ENCODE measurements at regions of chr5 and their contacts with region 1.

Region 1: GRCh38 chr5:40879163-40879942 is 29.9 kb upstream of the C7 start:
- DNase-seq: peak; percentile 13
- H3K4me3 ChIP-seq: no peak overlapping the region
- H3K27ac ChIP-seq: no peak overlapping the region
- H3K4me1 ChIP-seq: no peaks in the 10 kb centered on the region
- H3K27me3 ChIP-seq: no peaks in the 10 kb centered on the region
- CTCF ChIP-seq: peak; percentile 42 to 49

Region 2: DNA sequence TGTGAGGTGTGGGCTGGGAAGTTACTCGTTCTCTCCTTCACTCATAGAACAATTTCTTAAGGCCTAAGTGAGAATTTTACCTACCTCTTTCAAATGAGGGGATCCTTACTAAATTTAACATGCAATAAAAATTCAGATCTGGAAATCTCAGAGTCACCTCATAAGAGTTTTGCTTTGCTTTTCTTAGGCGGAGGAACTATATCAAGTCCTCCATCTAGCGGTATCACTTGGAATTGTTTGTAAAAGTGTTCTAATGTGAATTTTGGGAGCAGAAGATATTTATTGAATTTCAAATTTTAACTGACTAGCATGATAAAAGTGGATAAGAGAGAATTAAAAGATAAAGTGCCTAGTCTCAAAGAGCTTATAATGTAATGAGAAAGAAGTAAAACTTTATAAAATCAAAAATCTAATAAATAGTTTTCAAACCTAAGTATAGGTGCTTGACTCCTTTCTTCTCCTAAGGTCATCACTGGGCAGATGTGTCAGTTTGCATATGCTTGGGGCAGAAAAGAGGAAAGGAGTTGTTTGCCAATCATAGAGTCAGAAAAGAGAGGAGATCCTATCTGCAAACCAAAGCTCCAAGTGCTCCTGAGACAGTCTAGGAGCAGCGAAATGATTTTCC is 1308.8 kb before region 1 on chr5:
- CTCF ChIA-PET with region 1: no interaction called
- dilution Hi-C with region 1: no loop called
- in situ Hi-C with region 1: no loop called
- intact Hi-C with region 1: loop called (anchors 10 kb)
- DNase-seq: peak; percentile 28
- H3K4me3 ChIP-seq: no peak overlapping the region
- H3K27ac ChIP-seq: no peak overlapping the region
- H3K4me1 ChIP-seq: no peaks in the 10 kb centered on the region
- H3K27me3 ChIP-seq: no peaks in the 10 kb centered on the region
- CTCF ChIP-seq: peak; percentile 69 to 71

Region 3: GRCh38 chr5:39948867-39949468 is 930.4 kb before region 1 on chr5:
- CTCF ChIA-PET with region 1: no interaction called
- dilution Hi-C with region 1: no loop called
- in situ Hi-C with region 1: no loop called
- intact Hi-C with region 1: loop called (anchors 2 kb)
- DNase-seq: peak; percentile 50
- H3K4me3 ChIP-seq: no peak overlapping the region
- H3K27ac ChIP-seq: no peak overlapping the region
- H3K4me1 ChIP-seq: no peaks in the 10 kb centered on the region
- H3K27me3 ChIP-seq: no peaks in the 10 kb centered on the region
- CTCF ChIP-seq: peak; percentile 62 to 67

Region 4: DNA sequence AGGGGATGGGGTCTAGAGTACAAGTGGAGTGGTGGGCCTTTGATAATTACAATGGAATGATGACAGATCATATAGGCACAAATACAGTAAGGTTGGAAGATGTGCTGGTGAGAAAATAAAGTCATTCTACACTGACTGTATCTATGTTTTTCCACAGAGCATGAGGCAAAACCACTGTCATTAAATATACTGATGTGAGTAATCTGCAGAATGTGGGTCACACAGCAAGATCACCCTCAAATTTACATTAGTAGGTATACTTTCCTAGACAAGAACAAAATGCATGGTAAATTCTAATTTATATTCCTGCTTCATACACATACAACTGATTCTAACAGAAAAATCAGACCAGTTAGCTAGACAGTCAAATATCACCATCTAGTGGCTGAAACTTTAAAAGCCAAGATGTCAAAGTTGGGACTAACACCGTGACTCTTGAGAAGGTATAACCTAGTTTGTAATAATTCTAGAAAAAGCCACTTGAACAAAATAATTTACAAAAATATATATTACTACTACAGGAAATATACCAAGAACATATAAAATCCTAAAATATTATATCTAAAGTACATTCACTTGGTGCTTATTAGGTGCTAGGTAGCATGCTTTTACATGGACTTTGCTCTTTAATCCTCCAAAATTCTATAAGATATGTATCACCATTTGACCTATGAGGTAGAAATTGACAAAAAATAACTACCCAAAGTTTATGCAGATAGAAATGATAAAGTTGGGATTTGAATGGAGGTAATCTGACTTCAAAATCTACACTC is 143.1 kb before region 1 on chr5:
- CTCF ChIA-PET with region 1: no interaction called
- dilution Hi-C with region 1: no loop called
- in situ Hi-C with region 1: no loop called
- intact Hi-C with region 1: loop called (anchors 5 kb)
- DNase-seq: peak; percentile 55
- H3K4me3 ChIP-seq: no peak overlapping the region
- H3K27ac ChIP-seq: no peak overlapping the region
- H3K4me1 ChIP-seq: peaks cover 10% of the 10 kb centered on the region
- H3K27me3 ChIP-seq: no peaks in the 10 kb centered on the region
- CTCF ChIP-seq: peak; percentile 69 to 74

Region 5: DNA sequence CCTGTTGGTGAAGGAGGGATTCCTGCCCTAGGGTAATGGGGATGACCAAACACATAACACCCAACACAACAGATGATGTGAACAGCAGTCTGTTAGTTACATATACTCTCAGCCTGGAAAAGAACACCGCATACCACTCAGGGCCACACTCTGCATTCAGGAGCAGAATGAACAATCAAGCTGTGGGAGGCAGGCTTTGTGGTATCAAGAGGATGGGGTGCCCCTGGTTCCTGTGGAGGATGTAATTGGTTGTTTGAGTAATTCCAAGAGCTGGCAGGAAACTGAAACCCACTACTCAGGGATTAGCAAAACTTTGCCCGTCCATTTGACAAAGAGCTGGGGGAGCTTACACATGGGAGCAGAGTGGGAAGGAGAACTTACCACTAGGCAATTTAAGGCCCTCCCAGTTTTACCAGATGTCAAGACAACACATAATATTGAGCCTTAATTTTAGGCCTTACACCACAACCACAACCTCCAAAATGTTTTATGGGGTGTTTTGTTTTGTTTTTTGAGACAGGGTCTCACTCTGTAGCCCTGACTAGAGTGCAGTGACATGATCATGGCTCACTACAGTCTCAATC is 65.6 kb before region 1 on chr5:
- CTCF ChIA-PET with region 1: no interaction called
- dilution Hi-C with region 1: no loop called
- in situ Hi-C with region 1: no loop called
- intact Hi-C with region 1: no loop called
- DNase-seq: no peak
- H3K4me3 ChIP-seq: no peak overlapping the region
- H3K27ac ChIP-seq: no peak overlapping the region
- H3K4me1 ChIP-seq: no peaks in the 10 kb centered on the region
- H3K27me3 ChIP-seq: no peaks in the 10 kb centered on the region
- CTCF ChIP-seq: no peak

Region 6: GRCh38 chr5:40834849-40835787 is 44.2 kb before region 1 on chr5 and contains the start of gene RPL37:
- CTCF ChIA-PET with region 1: no interaction called
- dilution Hi-C with region 1: no loop called
- in situ Hi-C with region 1: no loop called
- intact Hi-C with region 1: loop called (anchors 5 kb)
- DNase-seq: peak; percentile 97
- H3K4me3 ChIP-seq: peak within 1 kb of the TSS; percentile 63 to 85 (median 65)
- H3K27ac ChIP-seq: peak within 1 kb of the TSS; percentile 83
- H3K4me1 ChIP-seq: peaks cover 23% of the 10 kb centered on the region
- H3K27me3 ChIP-seq: no peaks in the 10 kb centered on the region
- CTCF ChIP-seq: no peak
- total RNA-seq, gene RPL37: 257 to 1,240 TPM